Aorta (tissue), 5 donors: ENCODE measurements at regions of chr1 and their contacts with region 1.

Region 1: DNA sequence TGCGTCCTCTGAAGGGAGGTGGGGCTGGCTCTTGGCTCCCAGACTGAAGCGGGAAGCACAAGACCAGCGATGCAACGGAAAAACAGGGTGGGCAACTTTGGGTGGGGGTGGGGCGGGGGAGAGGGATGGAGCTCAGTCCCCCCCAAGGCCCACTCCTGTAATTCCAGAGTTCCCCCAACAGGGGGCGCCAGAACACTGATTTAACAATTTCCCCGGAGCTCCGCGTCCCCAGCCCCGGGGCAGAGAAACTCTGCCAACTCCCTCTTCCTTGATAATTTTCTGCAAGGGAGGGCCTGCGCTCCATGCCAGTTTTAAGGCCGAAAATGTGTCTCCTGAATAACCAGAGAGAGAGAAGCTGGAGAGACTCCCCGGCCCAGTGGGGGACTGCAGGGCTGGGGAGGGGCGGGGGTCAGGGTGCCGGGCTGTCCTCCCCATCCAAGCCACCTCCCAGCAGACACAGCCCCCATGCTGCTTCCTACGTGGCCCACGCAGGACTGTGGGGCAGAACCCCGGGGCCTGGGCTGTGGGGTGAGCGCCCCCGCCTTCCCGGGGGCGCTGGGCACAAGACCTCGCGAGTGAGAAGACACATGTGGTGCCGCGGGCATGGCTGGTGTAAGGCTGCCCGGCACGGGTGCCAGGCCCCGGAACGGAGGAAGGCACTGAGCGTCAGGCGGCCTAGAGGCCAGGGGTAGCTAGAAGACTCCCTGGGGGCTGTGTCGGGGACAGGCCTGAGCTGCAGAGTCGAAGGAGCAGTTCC is 51.4 kb downstream of the KIF21B start:
- DNase-seq: peak; percentile 77 to 91
- ATAC-seq: peak; percentile 68
- H3K4me3 ChIP-seq: no peak overlapping the region
- H3K27ac ChIP-seq: no peak overlapping the region
- H3K4me1 ChIP-seq: no peaks in the 10 kb centered on the region
- H3K27me3 ChIP-seq: no peaks in the 10 kb centered on the region

Region 2: DNA sequence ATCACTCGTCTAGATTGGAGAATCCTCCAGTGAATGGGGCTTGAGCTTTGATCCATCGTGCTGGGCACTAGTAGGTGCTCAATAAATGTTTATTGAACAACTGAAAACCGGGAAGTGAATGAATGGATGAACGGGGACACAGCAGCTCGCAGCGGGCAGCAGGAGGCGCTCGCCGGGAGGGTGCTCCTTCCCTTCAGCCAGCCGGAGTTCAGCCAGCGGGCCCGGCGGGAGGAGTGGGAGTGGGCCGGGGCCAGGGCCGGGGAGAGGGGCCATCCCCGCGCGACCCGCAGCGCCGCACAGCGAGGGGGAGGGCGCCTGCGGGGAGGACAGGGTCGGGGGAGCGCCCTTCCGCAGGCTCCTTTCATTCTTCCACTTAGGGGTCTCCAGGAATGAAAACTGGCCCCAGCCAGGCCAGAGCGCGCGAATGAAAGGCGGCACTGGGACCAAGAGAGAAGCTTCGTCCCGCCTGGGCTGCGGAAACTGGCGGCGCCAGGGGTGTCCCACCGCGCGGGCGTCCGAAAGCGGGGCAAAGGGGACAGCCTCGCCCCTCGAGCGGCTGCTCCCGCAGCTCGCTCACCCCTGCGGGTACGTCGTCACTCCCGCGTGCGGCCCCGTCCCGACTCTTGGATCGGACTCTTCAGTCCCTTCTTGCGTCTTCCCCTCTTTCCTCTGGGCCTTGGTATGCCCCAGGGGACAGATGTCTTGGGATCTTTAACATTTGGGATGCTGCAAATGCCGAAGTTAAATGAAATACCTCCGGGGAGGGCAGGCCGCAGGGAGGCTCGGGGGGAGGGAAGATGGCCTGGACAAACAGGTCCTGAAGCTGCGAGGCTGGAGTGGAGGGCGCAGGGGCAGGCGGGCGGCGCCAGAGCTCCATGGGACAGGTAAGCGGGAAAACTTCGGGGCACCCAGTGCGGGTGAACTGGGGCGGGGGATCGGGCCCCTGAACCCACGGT is 81.0 kb before region 1 on chr1:
- intact Hi-C with region 1: no loop called
- DNase-seq: peak; percentile 58 to 80
- ATAC-seq: peak; percentile 72
- H3K4me3 ChIP-seq: peak overlapping the region; percentile 18 to 42
- H3K27ac ChIP-seq: no peak overlapping the region
- H3K4me1 ChIP-seq: no peaks in the 10 kb centered on the region
- H3K27me3 ChIP-seq: no peaks in the 10 kb centered on the region

Region 3: DNA sequence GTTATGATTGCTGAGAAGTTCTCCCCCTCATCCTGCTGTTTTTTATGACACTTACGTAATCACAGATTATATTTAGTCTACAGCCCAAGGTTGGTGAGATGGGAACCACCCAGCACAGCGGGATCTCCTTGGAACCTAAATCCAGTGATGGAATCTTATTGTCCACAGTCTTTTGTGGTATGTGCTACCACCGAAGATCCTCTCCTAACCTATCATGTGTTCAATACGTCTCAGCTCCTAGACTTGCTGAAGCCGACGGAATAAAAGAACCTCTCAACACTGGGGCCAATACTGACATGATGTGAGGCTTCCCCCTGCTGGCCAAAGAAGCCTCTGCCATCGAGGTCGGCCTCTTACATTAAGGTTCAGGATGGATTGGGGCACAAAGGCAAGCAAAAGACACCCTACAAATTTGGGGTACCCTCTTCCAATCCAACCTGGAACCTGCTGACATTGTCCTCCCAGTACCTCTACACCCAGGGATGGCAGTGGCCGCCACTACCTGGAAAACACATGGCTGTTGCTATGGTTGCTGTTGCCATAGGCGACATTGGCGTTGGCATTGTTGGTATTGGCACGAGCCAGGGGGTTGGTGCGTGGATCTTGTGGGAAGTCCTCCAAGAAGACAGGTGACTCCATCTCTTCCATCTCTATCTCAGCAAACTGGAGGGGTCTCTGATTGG is 70.8 kb after region 1 on chr1:
- intact Hi-C with region 1: loop called (anchors 2 to 5 kb)
- DNase-seq: peak in 1 of 2 donors; percentile 64
- ATAC-seq: peak; percentile 85
- H3K4me3 ChIP-seq: no peak overlapping the region
- H3K27ac ChIP-seq: no peak overlapping the region
- H3K4me1 ChIP-seq: no peaks in the 10 kb centered on the region
- H3K27me3 ChIP-seq: no peaks in the 10 kb centered on the region

Region 4: DNA sequence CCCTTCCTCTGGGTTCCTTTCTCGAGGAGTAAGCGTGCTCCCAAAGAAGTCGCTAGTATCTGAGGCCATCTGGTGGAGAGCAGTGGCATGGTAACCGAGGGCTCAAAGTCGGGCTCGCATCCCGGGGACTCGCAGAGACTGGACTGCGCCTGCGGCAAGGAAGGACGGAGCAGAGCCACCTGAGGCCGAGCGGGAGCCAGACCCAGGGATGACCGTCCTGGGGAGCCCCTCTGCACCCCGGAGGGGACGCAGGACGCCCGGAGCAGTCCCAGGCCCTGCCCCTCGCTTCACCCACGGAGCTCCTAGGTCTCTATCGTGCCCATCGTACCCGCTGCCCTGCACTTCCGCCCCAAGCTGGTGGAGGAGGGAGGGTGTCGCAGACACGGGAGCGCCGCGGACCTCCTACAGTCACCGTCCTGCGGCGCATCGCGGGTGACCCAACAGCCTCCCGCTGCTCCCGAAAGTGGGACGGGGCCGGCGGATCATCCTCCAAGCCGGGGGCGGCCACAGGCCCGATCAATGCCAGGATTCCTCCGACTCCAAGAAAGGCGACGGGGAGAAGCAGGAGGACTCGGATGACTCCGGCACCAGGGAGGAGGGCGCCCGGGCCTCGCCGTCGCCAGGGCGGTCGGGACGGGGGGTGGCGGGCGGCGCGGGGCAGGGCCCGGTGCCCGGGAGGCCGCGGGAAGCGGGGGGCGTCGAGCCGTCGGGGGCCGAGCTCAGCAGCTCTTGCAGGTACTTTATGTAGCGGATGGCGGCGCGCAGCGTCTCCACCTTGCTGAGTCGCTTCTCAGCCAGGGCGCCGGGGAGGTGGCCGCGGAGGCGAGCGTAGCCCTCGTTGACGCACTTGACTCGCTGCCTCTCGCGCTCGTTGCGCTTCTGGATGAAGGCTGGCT is 142.4 kb after region 1 on chr1:
- intact Hi-C with region 1: loop called (anchors 2 to 5 kb)
- DNase-seq: peak; percentile 90 to 94
- ATAC-seq: peak; percentile 93
- H3K4me3 ChIP-seq: peak overlapping the region; percentile 18 to 38
- H3K27ac ChIP-seq: no peak overlapping the region
- H3K4me1 ChIP-seq: no peaks in the 10 kb centered on the region
- H3K27me3 ChIP-seq: no peaks in the 10 kb centered on the region

Region 5: DNA sequence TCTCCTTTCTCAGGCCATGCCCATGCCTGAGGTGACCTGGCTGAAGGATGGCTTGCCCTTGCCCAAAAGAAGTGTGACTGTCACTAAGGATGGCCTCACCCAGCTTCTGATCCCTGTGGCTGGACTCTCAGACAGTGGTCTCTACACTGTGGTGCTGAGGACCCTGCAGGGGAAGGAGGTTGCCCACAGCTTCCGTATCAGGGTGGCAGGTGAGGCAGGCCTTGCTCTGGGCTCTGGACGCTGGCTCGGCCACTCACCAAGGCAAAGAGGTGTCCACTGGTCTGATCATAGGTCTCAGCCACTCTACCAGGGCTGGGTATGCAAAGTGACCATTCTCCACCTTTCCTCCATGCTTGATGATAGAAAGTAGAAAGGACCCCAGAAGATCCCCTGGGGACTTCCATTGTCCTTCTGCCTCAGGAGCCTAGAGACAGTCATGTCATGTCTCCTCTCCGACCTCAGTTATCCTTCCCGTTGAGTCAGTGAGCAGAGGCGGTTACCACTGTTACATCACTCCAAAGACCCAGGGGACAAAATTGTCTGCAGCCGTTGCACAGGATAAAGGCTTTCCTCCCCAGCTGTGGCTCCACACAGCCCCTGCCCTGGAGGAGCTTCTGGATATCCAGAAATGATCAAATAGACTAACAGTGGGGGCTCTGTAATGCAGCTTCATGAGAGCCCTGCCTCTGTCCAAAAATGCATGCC is 252.7 kb after region 1 on chr1:
- intact Hi-C with region 1: loop called (anchors 5 to 10 kb)
- DNase-seq: peak in 1 of 2 donors; percentile 51
- ATAC-seq: no peak
- H3K4me3 ChIP-seq: no peak overlapping the region
- H3K27ac ChIP-seq: no peak overlapping the region
- H3K4me1 ChIP-seq: no peaks in the 10 kb centered on the region
- H3K27me3 ChIP-seq: no peaks in the 10 kb centered on the region

Region 6: DNA sequence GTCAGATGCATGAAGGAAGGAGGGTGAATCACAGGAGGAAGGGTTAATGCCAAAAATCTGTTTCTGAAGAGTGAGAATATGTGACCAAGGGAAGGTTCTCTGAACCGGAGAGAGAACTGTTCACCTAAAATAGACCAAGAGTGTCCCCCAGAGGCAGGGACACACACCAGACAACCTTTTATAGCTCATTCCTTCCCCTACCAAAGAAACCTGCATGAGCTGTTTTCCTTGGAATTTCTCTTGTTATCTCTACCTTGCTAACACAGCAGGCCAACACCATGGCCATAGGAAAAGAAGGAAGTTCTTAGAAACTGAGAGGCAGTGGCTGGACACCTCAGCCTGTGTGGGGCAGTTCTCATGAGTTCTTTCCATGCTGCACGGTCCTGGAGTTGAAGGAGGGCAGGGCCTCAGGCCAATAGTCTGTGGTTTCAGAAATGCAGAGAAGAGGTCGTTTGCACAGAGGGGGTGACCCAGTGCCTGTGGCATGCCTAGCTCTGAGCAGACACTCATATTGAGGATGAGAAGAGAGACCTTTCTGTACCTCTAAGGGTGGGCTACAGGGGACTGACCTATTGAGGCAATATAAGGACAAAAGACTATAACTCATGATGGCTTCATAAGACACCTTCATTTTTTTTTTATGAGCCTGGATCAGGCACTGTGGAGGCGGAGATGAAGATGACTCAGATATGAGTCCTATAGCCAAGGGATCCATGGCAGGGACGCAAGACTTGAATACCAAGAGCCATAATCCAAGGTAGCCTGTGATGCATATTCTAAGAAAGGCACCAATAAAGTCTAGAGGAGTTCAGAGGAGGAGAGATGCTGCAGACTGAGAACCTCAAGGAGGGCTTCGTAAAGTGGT is 257.9 kb after region 1 on chr1:
- intact Hi-C with region 1: loop called in 1 of 2 experiments (anchors 10 kb)
- DNase-seq: no peak
- ATAC-seq: no peak
- H3K4me3 ChIP-seq: no peak overlapping the region
- H3K27ac ChIP-seq: no peak overlapping the region
- H3K4me1 ChIP-seq: no peaks in the 10 kb centered on the region
- H3K27me3 ChIP-seq: no peaks in the 10 kb centered on the region